ENCODE measurements at regions of chr10 and their contacts with region 1.

Region 1: DNA sequence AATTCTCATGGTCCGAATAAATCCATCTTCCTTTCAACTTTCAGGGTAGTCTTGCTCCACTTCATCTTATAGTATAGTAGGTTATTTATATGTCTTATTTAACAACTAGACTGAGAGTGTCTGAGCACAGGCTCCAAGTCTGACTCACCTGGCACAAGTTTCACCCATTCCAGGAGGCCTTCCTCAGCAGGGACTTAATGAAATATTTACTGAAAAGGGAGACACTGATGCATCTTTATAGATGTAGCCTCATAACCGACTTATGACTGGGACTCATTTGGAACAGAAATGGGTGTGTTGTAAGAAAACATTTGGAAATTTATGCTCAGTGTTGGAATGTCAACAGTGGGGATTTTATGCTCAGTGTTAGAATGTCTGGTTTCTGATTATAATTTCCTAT is 59.9 kb downstream of the CH25H start:
- H3K4me3 Mint-ChIP-seq: no peak overlapping the region
- H3K27ac Mint-ChIP-seq: no peak overlapping the region
- H3K4me1 Mint-ChIP-seq: peaks cover 14% of the 10 kb centered on the region
- H3K27me3 Mint-ChIP-seq: peaks cover 14% of the 10 kb centered on the region

Region 2: DNA sequence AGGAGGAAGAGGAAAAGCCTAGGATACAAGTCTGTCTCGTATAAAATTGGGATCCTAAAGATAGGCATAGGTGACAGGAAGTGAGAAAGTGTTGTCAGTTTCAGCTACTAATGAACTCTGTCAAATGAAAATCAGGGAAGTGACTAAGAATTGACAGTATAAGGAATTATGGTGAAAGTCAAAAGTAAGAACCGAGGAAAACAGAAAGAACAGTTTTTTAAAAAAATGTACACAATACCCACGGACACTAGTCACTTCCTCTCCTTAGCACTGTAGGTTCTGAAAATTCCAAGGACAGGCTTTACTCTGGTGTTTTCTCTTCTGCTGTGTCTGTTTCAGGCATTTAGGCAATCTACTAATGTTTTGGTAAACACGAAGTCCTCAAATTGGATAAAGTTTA is 1371.5 kb before region 1 on chr10:
- intact Hi-C with region 1: no loop called
- H3K4me3 Mint-ChIP-seq: peak overlapping the region; percentile 50
- H3K27ac Mint-ChIP-seq: peak overlapping the region; percentile 45
- H3K4me1 Mint-ChIP-seq: peaks cover 6% of the 10 kb centered on the region
- H3K27me3 Mint-ChIP-seq: no peaks in the 10 kb centered on the region

Region 3: GRCh38 chr10:89201345-89202032 is 54.2 kb after region 1 on chr10:
- intact Hi-C with region 1: loop called (anchors 5 kb)
- H3K4me3 Mint-ChIP-seq: no peak overlapping the region
- H3K27ac Mint-ChIP-seq: no peak overlapping the region
- H3K4me1 Mint-ChIP-seq: peaks cover 19% of the 10 kb centered on the region
- H3K27me3 Mint-ChIP-seq: peaks cover 19% of the 10 kb centered on the region

Measured in dendritic cell treated with granulocyte-macrophage colony-stimulating factor and Interleukin-4, amounts not matched to agents 40 ng/mL and 50 ng/mL, for 4 days (primary cell).